Colonic mucosa (tissue), 4 donors: ENCODE measurements at regions of chr11 and their contacts with region 1.

Region 1: GRCh38 chr11:12963792-12964536 is 45.2 kb upstream of the RASSF10 start:
- DNase-seq: peak; percentile 84
- H3K4me3 ChIP-seq: no peak overlapping the region
- H3K27ac ChIP-seq: no peak overlapping the region
- H3K4me1 ChIP-seq: no peaks in the 10 kb centered on the region
- H3K27me3 ChIP-seq: no peaks in the 10 kb centered on the region
- CTCF ChIP-seq: peak; percentile 86

Region 2: DNA sequence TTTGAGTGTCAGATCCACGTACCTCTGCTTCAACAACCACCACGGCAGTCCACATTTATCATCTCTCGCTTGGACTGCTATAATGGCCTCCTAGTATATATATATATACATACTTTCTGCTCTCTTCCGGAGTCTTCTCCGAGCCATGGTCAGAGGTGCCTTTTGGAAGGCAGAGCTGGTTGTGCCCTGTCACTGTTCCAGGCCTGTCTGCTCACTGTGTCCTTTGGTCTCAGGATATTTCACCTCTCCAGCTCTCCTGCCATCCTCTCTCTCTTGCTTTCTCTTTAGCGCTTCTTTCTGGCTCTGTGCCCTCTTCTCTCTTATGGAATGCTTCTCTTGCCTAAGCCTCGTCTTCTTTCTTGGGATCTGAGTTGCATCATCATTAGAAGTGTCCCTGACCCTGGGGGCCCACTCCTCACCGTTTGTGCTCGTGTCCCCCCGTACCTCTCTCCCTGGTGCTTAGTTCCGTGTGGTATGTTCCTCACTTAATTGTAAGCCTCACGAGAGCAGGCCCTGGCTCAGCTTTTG is 40.9 kb before region 1 on chr11:
- intact Hi-C with region 1: no loop called
- DNase-seq: no peak
- H3K4me3 ChIP-seq: no peak overlapping the region
- H3K27ac ChIP-seq: no peak overlapping the region
- H3K4me1 ChIP-seq: no peaks in the 10 kb centered on the region
- H3K27me3 ChIP-seq: no peaks in the 10 kb centered on the region
- CTCF ChIP-seq: no peak

Region 3: GRCh38 chr11:13152736-13153533 is 189.0 kb after region 1 on chr11:
- intact Hi-C with region 1: loop called (anchors 2 kb)
- DNase-seq: no peak
- H3K4me3 ChIP-seq: no peak overlapping the region
- H3K27ac ChIP-seq: no peak overlapping the region
- H3K4me1 ChIP-seq: no peaks in the 10 kb centered on the region
- H3K27me3 ChIP-seq: no peaks in the 10 kb centered on the region
- CTCF ChIP-seq: no peak

Region 4: DNA sequence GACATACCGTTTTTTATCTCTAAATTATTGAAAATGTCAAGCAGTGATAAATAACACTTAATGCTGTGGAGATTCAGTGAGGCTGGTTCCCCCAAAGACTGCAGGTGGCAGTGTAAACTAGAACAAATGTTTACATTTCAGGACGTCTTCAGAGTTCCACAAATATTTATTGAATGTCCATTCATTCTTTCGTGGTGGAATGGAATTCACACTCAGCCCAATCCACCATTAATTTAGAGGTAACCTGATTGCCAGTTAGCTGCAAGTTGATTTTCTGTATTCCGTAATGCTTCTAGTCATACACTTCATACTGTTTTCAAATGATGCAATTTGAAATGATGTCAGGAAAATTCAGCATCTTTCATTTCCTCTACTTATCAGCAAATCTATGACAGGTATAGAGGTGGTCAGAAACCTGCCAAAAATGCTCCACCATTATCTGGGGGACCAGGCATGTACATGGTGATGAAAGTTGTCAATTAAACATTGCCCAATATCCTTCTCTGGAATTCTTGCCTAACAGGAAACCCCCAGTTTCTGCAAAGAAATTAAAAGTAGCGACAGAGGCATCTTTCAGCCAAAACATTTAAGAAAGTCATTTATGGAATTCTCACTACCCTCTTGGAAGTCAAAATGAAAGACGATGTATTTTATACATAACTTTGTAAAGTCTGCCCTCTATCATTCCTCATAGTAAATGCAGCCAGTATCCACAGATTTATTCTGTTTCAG is 219.3 kb after region 1 on chr11:
- intact Hi-C with region 1: loop called (anchors 10 kb)
- DNase-seq: no peak
- H3K4me3 ChIP-seq: no peak overlapping the region
- H3K27ac ChIP-seq: no peak overlapping the region
- H3K4me1 ChIP-seq: no peaks in the 10 kb centered on the region
- H3K27me3 ChIP-seq: no peaks in the 10 kb centered on the region
- CTCF ChIP-seq: peak; percentile 18

Region 5: DNA sequence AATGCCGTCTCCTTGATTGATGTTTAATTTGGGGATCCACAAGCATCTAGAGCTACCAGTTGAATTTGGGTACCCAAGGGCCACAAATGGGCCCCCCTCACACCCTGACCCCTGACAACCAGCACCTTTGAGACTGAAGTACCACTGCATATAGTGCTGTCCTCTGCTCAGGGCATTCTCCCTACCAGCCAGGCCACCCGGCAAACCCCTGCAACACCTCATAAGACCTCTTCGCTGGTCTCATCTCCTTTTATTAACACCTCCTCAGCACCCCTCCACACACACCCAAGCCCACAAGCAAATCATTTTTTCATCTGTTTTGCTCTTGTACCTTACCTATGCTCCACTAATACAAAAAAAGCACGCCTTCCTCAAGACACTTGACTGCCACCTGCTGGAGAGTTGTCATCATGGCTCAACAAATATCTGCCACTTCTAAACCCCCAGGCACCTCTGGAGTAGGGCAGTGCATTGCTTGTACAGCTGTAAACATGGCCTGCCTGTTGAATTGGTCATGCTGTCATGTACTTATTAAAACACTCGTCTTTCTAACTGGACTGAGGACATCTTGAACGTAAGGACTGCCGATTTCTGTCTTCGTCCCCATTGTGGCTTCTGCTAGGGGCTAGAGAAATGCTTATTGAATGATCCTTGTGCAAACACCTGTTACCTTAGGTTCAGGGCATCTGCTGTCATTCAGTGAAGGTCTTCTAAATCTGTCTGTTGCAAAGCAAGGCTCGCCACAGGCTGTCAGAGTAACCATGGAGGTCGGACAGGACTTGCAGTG is 380.2 kb after region 1 on chr11:
- intact Hi-C with region 1: loop called (anchors 10 kb)
- DNase-seq: peak; percentile 75
- H3K4me3 ChIP-seq: no peak overlapping the region
- H3K27ac ChIP-seq: no peak overlapping the region
- H3K4me1 ChIP-seq: no peaks in the 10 kb centered on the region
- H3K27me3 ChIP-seq: no peaks in the 10 kb centered on the region
- CTCF ChIP-seq: peak; percentile 59